Dendritic cell treated with granulocyte-macrophage colony-stimulating factor and Interleukin-4, amounts not matched to agents 40 ng/mL and 50 ng/mL, for 4 days (primary cell): ENCODE measurements at regions of chr1 and their contacts with region 1.

Region 1: DNA sequence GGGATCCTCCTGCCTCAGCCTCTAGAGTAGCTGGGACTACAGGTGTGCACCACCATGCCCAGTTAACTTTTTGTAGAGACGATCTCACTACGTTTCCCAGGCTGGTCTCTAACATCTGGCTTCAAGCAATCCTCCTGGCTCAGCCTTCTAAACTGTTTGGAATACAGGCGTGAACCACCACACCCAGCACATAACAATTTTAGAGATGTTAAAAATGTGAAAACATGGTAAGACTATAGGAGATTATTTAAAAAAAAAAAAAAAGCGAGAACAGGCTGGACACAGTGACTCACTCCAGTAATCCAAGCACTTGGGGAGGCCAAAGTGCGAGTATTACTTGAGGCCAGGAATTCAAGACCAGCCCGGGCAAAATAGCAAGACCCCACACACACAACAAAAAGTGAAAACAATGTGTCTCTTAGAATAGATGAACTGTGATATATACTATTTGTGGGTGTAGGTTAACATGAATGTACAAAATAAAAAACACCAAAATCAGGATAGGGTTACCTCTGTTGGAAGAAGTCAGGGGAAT is 19.6 kb downstream of the CCDC18 start:
- H3K4me3 Mint-ChIP-seq: no peak overlapping the region
- H3K27ac Mint-ChIP-seq: no peak overlapping the region
- H3K4me1 Mint-ChIP-seq: peaks cover 6% of the 10 kb centered on the region
- H3K27me3 Mint-ChIP-seq: no peaks in the 10 kb centered on the region

Region 2: DNA sequence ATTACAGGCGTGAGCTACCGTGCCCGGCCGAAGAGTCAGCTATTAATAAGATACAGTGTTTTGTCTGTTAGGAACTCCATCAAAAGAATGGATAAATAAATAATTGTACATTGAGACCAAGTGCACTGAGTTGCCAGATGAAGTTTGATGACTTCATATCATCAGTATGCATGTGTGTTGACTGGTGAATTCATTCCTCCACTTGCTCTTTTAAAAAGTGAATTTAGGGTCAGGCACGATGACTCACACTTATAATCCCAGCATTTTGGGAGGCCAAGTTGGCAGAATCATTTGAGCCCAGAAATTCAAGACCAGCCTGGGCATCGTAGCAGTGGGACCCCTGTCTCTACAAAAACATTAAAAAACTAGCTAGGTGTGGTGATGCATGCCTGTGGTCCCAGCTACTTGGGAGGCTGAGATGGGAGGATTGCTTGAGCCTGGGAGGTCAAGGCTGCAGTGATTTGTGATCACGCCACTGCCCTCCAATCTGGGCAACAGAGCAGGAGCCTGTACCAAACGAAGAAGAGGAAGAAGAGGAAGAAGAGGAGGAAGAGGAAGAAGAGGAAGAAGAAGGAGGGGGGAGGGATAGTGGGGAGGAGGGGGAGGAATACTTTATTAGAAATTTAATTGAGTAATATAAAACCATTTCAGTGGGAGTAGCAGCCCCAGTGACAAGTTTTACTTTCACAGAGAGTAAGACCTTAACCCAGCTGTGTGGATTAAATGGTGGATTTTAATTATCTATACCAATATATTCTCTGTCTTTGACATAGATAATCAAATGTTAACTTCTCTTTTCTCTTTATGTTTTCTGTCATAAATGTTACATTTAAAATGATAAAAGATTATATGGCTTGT is 55.3 kb after region 1 on chr1:
- intact Hi-C with region 1: loop called (anchors 10 kb)
- H3K4me3 Mint-ChIP-seq: no peak overlapping the region
- H3K27ac Mint-ChIP-seq: no peak overlapping the region
- H3K4me1 Mint-ChIP-seq: peaks cover 13% of the 10 kb centered on the region
- H3K27me3 Mint-ChIP-seq: no peaks in the 10 kb centered on the region